Left ventricle myocardium superior (tissue), 1 donor: ENCODE measurements at regions of chr6 and their contacts with region 1.

Region 1: DNA sequence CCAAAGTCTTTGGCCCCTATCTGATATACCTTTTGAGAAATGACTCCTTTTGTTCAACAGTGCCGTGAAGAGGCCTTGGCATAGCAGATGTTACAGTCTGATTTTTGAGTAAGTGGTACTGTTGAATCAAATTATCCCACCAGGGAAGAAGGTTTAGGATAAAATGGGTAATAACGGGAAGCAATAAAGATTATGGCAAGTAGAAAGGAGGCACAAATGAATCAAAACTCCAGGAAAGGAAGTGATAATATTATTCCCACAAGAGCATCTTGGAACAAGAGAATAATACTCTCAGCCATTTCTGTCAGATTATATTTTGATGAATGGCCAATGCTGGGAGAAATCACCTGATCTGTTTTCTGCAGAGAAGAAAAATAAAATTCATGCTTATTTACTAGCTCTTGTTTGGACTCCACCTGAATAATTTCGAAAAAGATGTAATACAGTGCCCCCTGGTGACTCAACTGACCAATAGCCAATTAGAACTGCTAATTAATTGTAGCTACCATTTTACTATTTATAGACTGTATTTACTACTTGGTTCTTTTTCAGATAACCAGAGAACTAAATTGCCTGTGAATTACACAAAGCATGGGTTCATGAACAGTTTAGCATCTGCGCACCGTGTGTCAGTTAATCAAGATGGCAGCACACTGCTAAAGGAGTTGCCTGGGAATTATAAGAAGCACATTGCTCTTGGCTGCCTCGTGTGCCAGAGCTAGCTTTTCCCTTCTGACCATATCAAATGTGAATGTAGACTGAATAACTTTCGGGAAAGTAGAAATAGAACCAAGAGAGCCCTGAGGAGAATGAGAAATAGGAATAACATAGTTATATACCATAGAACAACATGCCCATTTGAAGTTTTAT is 78.5 kb upstream of the TRDN start:
- DNase-seq: no peak
- ATAC-seq: peak; percentile 64

Region 2: GRCh38 chr6:123415844-123416468 is 299.3 kb before region 1 on chr6:
- intact Hi-C with region 1: loop called (anchors 5 kb)
- DNase-seq: no peak
- ATAC-seq: peak; percentile 76

Region 3: DNA sequence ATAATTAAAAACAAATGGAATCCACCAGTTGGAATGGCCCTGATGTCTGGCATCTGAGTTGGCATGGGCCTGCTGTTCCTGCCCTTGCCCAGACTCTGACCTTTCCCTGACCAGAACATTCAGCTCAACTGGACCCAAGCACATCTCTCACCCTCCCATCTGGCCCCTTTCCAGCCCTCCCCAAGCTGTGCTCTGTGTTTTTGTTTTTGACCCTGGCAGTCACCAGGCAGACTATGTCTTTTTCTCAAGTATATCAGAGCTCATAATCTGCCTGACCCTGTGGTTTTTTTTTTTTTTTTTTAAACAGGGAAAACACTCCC is 196.1 kb before region 1 on chr6:
- intact Hi-C with region 1: loop called (anchors 10 kb)
- DNase-seq: peak; percentile 85
- ATAC-seq: peak; percentile 94